ENCODE measurements at regions of chr9 and their contacts with region 1.

Region 1: GRCh38 chr9:15310107-15310850 is 3.3 kb upstream of the TTC39B start:
- DNase-seq: peak; percentile 56
- H3K4me3 Mint-ChIP-seq: peak overlapping the region; percentile 29
- H3K27ac Mint-ChIP-seq: peak overlapping the region; percentile 94
- H3K4me1 Mint-ChIP-seq: peaks cover 53% of the 10 kb centered on the region
- H3K27me3 Mint-ChIP-seq: no peaks in the 10 kb centered on the region

Region 2: DNA sequence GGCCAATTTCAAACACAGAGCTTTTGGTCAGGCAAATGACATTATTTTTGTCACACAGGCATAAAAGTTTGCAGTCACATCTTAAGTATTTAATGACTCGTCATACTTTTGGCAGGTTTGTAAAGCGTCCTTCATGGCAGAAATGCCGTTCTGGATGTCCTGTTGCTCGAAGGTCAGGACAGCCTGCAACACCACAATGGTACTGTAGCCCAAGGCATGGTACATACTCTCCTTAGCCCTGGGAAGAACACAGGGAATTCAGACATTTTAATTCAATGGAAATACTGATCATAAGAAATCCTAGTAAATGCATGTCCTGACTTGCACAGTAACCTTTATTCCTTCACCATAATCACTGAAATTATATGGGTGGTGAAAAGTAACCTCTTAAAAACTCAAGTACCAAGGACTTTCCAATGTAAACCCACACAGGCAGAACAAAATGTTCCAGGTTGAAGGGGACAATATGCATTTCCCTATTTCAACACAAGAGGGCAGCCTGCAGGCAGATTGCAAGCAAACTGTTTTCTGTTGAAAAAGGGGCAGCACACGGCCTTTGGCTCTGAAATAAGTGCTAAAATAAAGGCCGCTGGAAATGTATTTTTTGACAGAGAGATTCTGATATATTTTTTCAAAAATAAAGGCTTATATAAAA is 99.0 kb before region 1 on chr9:
- CTCF ChIA-PET with region 1: interaction called, 11 read pairs
- DNase-seq: peak; percentile 59
- H3K4me3 Mint-ChIP-seq: no peak overlapping the region
- H3K27ac Mint-ChIP-seq: no peak overlapping the region
- H3K4me1 Mint-ChIP-seq: no peaks in the 10 kb centered on the region
- H3K27me3 Mint-ChIP-seq: no peaks in the 10 kb centered on the region

Region 3: DNA sequence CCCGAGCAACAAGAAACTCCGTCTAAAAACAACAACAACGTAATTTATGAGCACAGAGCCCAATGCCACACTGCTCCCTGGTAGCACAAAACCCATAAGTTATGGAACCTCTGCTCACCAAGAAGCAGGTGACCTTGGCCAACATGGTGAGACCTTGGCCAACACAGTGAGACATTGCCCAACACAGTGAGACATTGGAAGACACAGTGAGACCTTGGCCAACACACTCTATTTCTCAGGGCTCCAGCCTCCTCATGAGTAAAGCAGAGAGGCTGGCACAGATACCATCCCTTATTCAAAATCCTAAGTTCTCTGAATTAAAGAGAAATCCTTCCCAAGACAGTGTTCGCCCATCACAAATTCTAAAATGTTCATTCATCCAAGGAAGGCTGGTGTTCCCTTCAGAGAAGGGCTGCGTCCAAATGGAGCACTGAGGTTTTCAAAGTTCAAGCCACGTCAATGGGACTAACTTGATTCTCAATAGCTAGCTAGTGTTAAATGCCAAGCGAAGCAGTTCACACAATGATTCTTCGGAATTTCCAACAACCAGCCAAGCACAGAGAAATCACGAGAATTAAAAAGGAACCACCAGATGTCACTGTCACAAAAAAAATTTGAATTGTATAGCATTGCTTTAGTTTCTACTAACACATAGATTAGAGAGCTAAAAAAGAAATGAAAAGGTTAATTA is 32.7 kb before region 1 on chr9:
- CTCF ChIA-PET with region 1: interaction called, 11 read pairs
- DNase-seq: no peak
- H3K4me3 Mint-ChIP-seq: no peak overlapping the region
- H3K27ac Mint-ChIP-seq: no peak overlapping the region
- H3K4me1 Mint-ChIP-seq: no peaks in the 10 kb centered on the region
- H3K27me3 Mint-ChIP-seq: no peaks in the 10 kb centered on the region

Region 4: GRCh38 chr9:15299374-15299939 is 10.8 kb before region 1 on chr9:
- CTCF ChIA-PET with region 1: interaction called, 12 read pairs
- DNase-seq: peak; percentile 70
- H3K4me3 Mint-ChIP-seq: peak overlapping the region; percentile 52
- H3K27ac Mint-ChIP-seq: peak overlapping the region; percentile 96
- H3K4me1 Mint-ChIP-seq: peaks cover 73% of the 10 kb centered on the region
- H3K27me3 Mint-ChIP-seq: no peaks in the 10 kb centered on the region

Measured in activated naive CD4-positive, alpha-beta T cell treated with anti-CD3 and anti-CD28 coated beads, Interleukin-2, amount 10 ng/mL, durations not matched to agents 7 days and 5 days (primary cell).